H1 (cell line): ENCODE measurements at regions of chr9 and their contacts with region 1.

Region 1: GRCh38 chr9:133635098-133635497 is 1.1 kb upstream of the DBH start:
- DNase-seq: no peak
- H3K4me3 ChIP-seq: no peak overlapping the region
- H3K27ac ChIP-seq: no peak overlapping the region
- H3K4me1 ChIP-seq: peaks cover 0 to 28% (median 18%) of the 10 kb centered on the region in 4 experiments; a peak in 6 of 7 replicates
- H3K27me3 ChIP-seq: no peaks in the 10 kb centered on the region; a peak in 1 of 7 replicates
- CTCF ChIP-seq: no peak
- EP300 ChIP-seq: no peak
- POLR2A ChIP-seq: no peak
- RAD21 ChIP-seq: no peak

Region 2: DNA sequence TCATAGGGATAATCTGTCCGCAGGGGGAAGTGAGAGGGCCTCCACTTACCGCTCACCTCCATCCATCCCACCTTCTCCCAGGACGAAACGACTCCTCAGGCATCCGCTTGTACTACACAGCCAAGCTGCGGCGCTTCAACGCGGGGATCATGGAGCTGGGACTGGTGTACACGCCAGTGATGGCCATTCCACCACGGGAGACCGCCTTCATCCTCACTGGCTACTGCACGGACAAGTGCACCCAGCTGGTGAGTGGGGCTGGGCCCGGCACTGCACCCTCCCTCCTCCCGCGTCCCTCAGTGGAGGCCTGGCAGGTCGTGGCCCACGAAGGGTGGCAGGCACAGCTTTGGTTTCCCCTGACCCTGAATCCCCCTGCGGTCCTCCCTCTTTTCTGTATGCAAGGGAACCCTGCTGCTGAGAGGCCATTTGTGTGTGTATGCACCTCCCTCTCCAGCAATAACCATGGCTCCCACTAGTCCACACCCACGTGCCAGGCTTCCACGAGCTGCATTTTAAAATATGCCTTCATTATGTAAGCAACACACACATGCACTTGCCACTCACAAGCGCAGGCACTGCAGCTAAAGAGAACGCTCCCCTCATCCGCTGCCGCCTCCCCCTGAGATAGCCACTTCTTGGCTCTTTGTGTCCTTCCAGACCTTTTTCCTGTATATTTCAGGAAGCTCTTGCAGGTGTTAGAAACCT is 12.8 kb after region 1 on chr9:
- CTCF ChIA-PET with region 1: interaction called, 14 read pairs
- POLR2A ChIA-PET with region 1: no interaction called
- DNase-seq: no peak
- H3K4me3 ChIP-seq: no peak overlapping the region
- H3K27ac ChIP-seq: no peak overlapping the region
- H3K4me1 ChIP-seq: peaks cover 0 to 5% (median 0%) of the 10 kb centered on the region in 4 experiments; a peak in 2 of 7 replicates
- H3K27me3 ChIP-seq: no peaks in the 10 kb centered on the region
- CTCF ChIP-seq: no peak
- EP300 ChIP-seq: no peak
- POLR2A ChIP-seq: no peak
- RAD21 ChIP-seq: no peak

Region 3: DNA sequence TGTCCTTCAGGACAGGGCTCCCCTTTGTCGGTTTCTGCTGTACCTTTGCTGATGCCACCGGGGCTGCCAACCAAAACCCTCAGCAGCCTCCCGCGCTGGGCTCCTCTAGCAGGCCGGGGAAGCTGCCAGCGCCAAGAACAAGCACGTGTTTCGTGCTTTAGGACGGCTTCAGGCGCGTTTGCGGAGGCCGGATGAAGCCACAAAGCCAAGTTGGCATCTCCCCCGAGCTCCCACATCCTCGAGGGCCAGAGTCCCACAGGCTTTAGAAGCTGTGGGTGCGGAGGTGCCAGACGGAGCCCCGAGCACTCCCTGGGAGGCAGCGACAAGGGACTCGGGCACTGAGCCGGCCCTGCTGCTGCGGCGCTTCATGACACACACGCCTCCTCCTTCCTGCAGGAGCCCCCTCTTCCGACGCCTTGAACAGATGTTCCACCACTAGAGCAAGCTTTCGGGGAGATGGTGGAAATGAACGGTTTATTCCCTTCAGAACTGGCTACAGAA is 66.3 kb after region 1 on chr9:
- CTCF ChIA-PET with region 1: no interaction called
- POLR2A ChIA-PET with region 1: no interaction called
- DNase-seq: no peak
- H3K4me3 ChIP-seq: no peak overlapping the region
- H3K27ac ChIP-seq: no peak overlapping the region
- H3K4me1 ChIP-seq: peaks cover 0 to 13% (median 10%) of the 10 kb centered on the region in 4 experiments; a peak in 5 of 7 replicates
- H3K27me3 ChIP-seq: no peaks in the 10 kb centered on the region; a peak in 3 of 7 replicates
- CTCF ChIP-seq: no peak
- EP300 ChIP-seq: no peak
- POLR2A ChIP-seq: no peak
- RAD21 ChIP-seq: no peak